CD4-positive, alpha-beta memory T cell (primary cell): ENCODE measurements at regions of chr2 and their contacts with region 1.

Region 1: DNA sequence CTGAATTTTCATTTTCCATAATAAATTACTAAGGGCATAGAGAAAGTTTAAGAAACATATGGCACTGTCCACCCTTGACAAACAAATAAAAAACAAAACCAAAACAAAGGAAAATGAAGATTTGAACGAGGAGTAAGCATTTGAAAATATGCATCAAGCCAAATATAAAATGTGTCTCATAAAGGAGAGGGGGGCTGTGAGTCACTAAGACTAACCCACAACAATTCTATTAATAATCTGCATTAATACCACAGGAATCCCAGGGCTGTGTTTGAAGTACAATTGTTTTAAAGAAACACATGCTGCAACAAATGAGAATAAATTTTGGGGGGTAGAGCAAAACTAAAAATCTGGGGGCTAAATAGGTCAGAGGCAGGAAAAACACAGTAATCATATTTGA is 53.8 kb upstream of the STK17B start:
- DNase-seq: no peak
- H3K4me3 ChIP-seq: no peak overlapping the region
- H3K4me3 Mint-ChIP-seq: peak overlapping the region in 3 of 8 donors; percentile 33 to 57 (median 41)
- H3K27ac ChIP-seq: no peak overlapping the region
- H3K27ac Mint-ChIP-seq: peak overlapping the region in 5 of 7 donors; percentile 1 to 68 (median 54)
- H3K4me1 ChIP-seq: peaks cover 79% of the 10 kb centered on the region
- H3K4me1 Mint-ChIP-seq: peaks cover 51 to 85% (median 69%) of the 10 kb centered on the region in 4 donors
- H3K27me3 ChIP-seq: no peaks in the 10 kb centered on the region
- H3K27me3 Mint-ChIP-seq: no peaks in the 10 kb centered on the region

Region 2: GRCh38 chr2:196086517-196087368 is 138.5 kb before region 1 on chr2:
- CTCF ChIA-PET with region 1: interaction called, 129 read pairs
- POLR2A ChIA-PET with region 1: no interaction called
- intact Hi-C with region 1: no loop called
- DNase-seq: no peak
- H3K4me3 ChIP-seq: no peak overlapping the region
- H3K4me3 Mint-ChIP-seq: peak overlapping the region in 4 of 8 donors; percentile 14 to 68 (median 20)
- H3K27ac ChIP-seq: no peak overlapping the region
- H3K27ac Mint-ChIP-seq: peak overlapping the region in 1 of 7 donors; percentile 41
- H3K4me1 ChIP-seq: peaks cover 11% of the 10 kb centered on the region
- H3K4me1 Mint-ChIP-seq: peaks cover 15 to 39% (median 24%) of the 10 kb centered on the region in 4 donors
- H3K27me3 ChIP-seq: no peaks in the 10 kb centered on the region
- H3K27me3 Mint-ChIP-seq: no peaks in the 10 kb centered on the region

Region 3: GRCh38 chr2:196137271-196137670 is 87.9 kb before region 1 on chr2:
- CTCF ChIA-PET with region 1: interaction called, 16 read pairs
- POLR2A ChIA-PET with region 1: interaction called, 11 read pairs
- intact Hi-C with region 1: no loop called
- DNase-seq: no peak
- H3K4me3 ChIP-seq: no peak overlapping the region
- H3K4me3 Mint-ChIP-seq: peak overlapping the region in 1 of 8 donors; percentile 2
- H3K27ac ChIP-seq: no peak overlapping the region
- H3K27ac Mint-ChIP-seq: peak overlapping the region in 3 of 7 donors; percentile 22 to 72 (median 70)
- H3K4me1 ChIP-seq: peaks cover 29% of the 10 kb centered on the region
- H3K4me1 Mint-ChIP-seq: peaks cover 8 to 39% (median 24%) of the 10 kb centered on the region in 4 donors
- H3K27me3 ChIP-seq: no peaks in the 10 kb centered on the region
- H3K27me3 Mint-ChIP-seq: no peaks in the 10 kb centered on the region

Region 4: DNA sequence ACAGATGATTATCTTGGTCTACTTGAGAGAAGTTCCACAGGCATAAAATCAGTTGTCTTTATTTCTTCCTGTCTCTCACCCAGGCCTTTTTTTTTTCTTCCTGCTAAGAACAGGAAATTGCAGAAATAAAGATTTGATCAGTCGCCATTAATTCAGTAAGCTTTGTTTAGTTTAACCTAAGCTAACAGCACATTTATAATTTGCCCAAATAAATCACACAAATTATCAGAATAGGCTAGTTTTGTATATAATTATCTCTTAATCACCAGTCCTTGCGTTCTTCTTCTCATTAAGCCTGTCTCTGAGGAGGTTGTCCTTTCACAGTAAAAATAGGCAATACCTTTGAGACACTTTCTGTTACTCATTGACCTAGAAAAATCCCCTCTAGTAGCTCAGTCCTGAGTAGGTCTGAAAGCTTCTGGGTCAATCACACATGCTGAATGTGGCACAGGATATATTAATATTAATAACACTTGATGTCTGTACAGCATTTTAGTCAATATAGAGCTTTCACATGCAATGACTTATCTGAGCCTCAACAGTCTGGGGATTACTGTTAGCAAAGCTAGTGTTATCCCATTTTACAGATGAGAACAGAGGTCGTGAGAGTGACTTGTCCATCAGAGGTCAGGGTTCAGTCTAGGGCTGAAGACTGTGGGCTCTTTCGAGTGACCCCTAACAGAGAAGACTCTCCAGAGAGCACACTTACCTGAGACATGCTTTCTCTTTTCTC is 42.6 kb before region 1 on chr2:
- CTCF ChIA-PET with region 1: interaction called, 37 read pairs
- POLR2A ChIA-PET with region 1: interaction called, 43 read pairs
- intact Hi-C with region 1: no loop called
- DNase-seq: peak in 1 of 5 donors; percentile 53
- H3K4me3 ChIP-seq: peak overlapping the region; percentile 2 to 7
- H3K4me3 Mint-ChIP-seq: peak overlapping the region; percentile 64 to 85 (median 74)
- H3K27ac ChIP-seq: peak overlapping the region; percentile 55
- H3K27ac Mint-ChIP-seq: peak overlapping the region; percentile 91 to 98 (median 95)
- H3K4me1 ChIP-seq: peaks cover 92% of the 10 kb centered on the region
- H3K4me1 Mint-ChIP-seq: peaks cover 65 to 93% (median 80%) of the 10 kb centered on the region in 4 donors
- H3K27me3 ChIP-seq: no peaks in the 10 kb centered on the region
- H3K27me3 Mint-ChIP-seq: no peaks in the 10 kb centered on the region

Region 5: GRCh38 chr2:196239622-196240587 is 14.7 kb after region 1 on chr2:
- CTCF ChIA-PET with region 1: interaction called, 38 read pairs
- POLR2A ChIA-PET with region 1: interaction called, 28 read pairs
- intact Hi-C with region 1: no loop called
- DNase-seq: peak; percentile 84 to 90 (median 87)
- H3K4me3 ChIP-seq: peak overlapping the region in 1 of 2 donors; percentile 44
- H3K4me3 Mint-ChIP-seq: peak overlapping the region; percentile 65 to 82 (median 78)
- H3K27ac ChIP-seq: peak overlapping the region; percentile 56
- H3K27ac Mint-ChIP-seq: peak overlapping the region; percentile 95 to 98 (median 96)
- H3K4me1 ChIP-seq: peaks cover 76% of the 10 kb centered on the region
- H3K4me1 Mint-ChIP-seq: peaks cover 62 to 86% (median 70%) of the 10 kb centered on the region in 4 donors
- H3K27me3 ChIP-seq: no peaks in the 10 kb centered on the region
- H3K27me3 Mint-ChIP-seq: no peaks in the 10 kb centered on the region